Vagina (tissue), 2 donors: ENCODE measurements at regions of chr9 and their contacts with region 1.

Region 1: DNA sequence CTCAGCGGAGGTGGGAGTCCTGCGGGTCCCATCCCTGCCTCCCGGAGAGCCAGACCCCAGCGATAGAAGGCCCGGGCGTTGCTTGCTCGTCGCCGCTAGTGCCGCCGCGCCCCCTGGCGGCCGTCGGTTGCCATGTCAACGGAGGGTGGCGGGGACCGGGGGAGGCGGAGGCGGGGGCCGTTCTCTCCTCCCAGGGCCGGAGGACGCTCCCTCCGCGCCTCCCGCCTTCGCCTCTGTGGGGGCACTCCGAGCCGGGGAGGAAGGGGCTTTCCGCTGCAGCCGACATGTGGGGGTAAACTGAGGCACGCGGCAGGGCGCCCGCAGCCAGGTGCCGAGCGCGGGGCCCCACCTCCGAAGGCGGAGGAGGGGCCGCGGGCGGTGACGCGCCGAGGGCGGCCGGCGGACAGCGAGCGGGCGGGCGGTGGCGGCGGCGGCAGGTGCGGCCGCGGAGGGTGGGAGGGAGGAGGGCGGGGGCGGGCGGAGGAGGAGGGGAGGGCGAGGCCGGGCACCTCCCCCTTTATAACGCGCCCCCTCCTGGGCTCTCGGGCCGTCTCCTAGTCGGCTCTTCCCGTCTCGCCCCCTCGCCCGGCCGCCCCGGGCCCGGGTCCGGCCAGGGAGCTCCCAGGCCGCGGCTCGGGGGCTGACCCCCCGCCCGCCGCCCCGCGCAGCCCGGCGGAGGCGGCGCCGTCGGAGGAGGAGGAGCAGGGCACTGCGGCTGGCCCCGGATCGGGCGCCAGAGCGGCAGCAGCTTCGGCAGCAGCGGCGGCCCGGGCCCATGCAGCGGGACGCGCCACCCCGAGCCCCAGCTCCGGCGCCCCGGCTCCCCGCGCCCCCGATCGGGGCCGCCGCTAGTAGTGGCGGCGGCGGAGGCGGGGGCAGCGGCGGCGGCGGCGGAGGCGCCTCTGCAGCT is 556 bp upstream of the CDK9 start:
- DNase-seq: no peak
- H3K4me3 ChIP-seq: peak overlapping the region; percentile 53 to 99
- H3K27ac ChIP-seq: peak overlapping the region; percentile 91
- H3K4me1 ChIP-seq: peaks cover 47% of the 10 kb centered on the region
- H3K27me3 ChIP-seq: no peaks in the 10 kb centered on the region
- CTCF ChIP-seq: peak; percentile 89 to 99 (median 93)
- POLR2A ChIP-seq: no peak

Region 2: DNA sequence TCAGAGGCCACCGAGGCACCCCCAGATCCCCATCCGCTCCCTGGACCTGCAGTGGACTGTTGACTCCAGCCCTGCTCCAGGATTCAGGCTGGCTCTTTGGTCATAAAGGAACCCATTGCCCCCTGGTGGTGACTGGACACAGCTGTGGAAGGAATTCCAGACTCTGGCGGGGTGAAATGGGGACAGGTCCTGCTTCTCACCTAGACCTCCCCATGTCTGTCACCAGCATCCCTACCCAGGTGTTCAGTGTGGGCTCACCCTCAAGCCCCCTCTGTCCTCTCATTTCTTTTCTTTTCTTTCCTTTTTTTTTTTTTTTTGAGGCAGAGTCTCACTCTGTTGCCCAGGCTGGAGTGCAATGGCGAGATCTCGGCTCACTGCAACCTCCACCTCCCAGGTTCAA is 198.7 kb before region 1 on chr9:
- intact Hi-C with region 1: loop called (anchors 5 kb)
- DNase-seq: no peak
- H3K4me3 ChIP-seq: no peak overlapping the region
- H3K27ac ChIP-seq: no peak overlapping the region
- H3K4me1 ChIP-seq: peaks cover 9% of the 10 kb centered on the region
- H3K27me3 ChIP-seq: no peaks in the 10 kb centered on the region
- CTCF ChIP-seq: peak; percentile 81 to 91 (median 88)
- POLR2A ChIP-seq: no peak

Region 3: DNA sequence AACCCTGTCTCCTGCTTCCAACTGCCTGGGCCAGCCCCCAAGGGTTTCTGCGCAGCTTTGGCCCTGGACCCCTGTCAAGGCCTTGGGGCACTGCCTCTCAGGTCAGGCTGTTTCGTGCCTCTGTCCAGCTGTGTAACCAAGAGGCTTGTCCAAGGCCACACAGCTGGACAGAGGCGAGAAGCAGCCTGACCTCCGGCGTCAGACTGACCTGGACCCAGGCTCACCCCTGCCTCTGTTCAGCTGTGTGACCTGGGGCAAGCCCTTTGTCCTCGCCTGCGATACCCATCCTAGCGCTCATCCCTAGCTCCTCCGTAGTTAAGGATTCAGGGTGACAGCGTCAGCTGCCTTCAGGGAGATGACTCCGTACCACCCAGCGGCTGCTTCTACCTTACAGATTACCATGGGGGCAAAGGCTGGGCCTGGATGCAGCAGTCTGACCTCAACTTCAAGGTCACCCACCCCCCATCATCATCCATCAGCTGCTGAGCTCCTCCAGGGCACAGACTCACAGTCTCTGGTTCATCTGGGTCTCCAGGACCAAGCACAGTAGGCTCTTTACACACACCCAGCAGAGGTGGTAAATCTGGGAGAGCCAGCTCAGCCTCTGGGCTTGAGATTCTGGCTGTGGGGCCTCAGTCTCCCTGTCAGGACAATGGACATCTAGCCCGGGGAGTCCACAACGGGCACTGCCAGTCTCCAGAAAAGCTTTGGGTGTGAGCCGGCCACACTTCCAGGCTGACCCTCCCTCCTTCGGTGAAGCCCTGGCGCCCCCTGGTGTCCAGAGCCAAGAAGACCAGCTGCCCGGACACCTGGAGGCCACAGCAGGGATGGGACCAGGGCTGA is 84.3 kb after region 1 on chr9:
- intact Hi-C with region 1: loop called (anchors 5 kb)
- DNase-seq: no peak
- H3K4me3 ChIP-seq: no peak overlapping the region
- H3K27ac ChIP-seq: peak overlapping the region; percentile 53
- H3K4me1 ChIP-seq: peaks cover 21% of the 10 kb centered on the region
- H3K27me3 ChIP-seq: no peaks in the 10 kb centered on the region
- CTCF ChIP-seq: peak; percentile 73 to 96 (median 89)
- POLR2A ChIP-seq: peak in 1 of 2 donors; percentile 2

Region 4: DNA sequence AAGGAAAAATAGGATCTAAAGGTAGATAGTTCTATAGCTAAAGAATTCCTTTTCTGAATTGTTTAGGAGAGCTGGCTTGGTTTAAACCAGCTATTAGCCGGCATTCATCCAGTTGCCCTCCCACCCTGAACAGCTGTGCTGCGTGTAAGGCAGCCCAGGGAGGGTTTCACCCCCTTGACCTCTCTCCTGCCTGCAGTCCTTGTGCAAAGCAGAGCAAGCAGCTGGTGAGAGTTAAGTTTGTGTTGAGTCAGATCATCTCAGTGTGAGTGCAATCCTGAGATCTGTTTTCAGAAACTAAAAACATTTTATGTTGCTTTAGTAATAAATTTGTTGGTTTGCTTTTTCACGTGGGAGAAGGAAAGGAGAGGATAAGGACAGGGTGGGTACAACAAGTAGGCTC is 295.8 kb after region 1 on chr9:
- intact Hi-C with region 1: no loop called
- DNase-seq: peak in 1 of 2 donors; percentile 88
- H3K4me3 ChIP-seq: no peak overlapping the region
- H3K27ac ChIP-seq: peak overlapping the region; percentile 85
- H3K4me1 ChIP-seq: peaks cover 92% of the 10 kb centered on the region
- H3K27me3 ChIP-seq: no peaks in the 10 kb centered on the region
- CTCF ChIP-seq: no peak
- POLR2A ChIP-seq: no peak